Motor neuron (in vitro differentiated cells): ENCODE measurements at regions of chr18 and their contacts with region 1.

Region 1: DNA sequence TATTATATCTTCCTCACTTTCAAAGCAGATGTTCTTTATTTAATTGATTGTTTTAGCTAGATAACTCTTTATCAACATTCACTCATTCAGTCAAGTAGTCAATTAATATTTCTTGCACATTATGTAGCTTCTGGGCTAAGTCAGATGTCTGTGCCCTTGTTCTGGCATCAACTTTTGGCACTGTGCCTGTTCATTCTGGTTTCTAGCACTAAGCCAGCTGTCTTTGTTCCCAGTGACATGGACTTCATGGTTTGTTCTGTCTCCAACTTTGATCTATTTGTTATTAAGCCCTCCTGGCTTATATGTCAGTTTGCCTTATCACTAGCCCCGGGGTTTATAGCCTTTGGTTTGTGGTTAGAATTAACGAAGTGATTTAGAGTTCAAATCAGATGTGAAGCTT is 247.9 kb upstream of the SYT4 start:
- ATAC-seq: no peak
- H3K4me3 ChIP-seq: no peak overlapping the region
- H3K27ac ChIP-seq: no peak overlapping the region
- H3K4me1 ChIP-seq: no peaks in the 10 kb centered on the region

Region 2: DNA sequence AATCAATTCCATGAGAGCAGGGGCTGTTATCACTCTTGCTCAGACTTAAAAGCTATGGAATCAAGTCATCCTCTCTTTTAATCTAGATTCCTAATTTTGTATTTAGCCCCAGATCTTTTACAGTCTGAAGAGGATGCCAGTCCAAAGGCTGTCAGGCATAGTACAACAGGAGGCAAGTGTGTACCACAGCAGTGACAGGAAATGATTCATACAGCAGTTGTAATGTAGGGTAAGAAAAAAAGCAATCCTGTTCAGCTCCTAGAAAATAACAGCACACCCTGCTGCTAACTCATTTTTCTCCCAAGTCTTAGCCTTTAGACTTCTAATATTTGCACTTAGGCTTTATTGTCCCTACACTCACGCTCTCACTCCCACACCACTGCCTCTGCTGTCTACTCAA is 120.1 kb before region 1 on chr18:
- in situ Hi-C with region 1: no loop called
- ATAC-seq: peak in 5 of 8 experiments; percentile 49 to 64 (median 52)
- H3K4me3 ChIP-seq: no peak overlapping the region
- H3K27ac ChIP-seq: no peak overlapping the region
- H3K4me1 ChIP-seq: peaks cover 0 to 4% of the 10 kb centered on the region in 2 donors

Region 3: DNA sequence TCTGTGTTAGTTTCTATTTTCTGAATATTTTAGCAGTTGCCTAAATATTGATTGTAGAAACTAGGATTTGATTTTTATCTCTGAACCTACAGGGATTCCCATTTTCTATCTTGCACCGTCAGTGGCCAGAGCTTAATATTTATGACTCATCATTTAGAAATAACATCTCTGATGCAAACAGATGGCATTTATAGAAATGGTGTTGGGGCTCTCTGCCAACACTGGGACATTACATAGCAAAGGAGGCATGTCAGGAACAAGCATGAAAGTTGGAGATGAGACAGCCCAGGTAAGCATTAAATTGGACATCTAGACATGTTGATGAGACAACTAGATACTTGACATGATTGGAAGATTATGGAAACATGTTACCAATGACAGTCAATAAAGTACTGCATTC is 82.6 kb before region 1 on chr18:
- in situ Hi-C with region 1: loop called in 1 of 9 experiments (anchors 25 kb)
- ATAC-seq: no peak
- H3K4me3 ChIP-seq: no peak overlapping the region
- H3K27ac ChIP-seq: no peak overlapping the region
- H3K4me1 ChIP-seq: no peaks in the 10 kb centered on the region

Region 4: DNA sequence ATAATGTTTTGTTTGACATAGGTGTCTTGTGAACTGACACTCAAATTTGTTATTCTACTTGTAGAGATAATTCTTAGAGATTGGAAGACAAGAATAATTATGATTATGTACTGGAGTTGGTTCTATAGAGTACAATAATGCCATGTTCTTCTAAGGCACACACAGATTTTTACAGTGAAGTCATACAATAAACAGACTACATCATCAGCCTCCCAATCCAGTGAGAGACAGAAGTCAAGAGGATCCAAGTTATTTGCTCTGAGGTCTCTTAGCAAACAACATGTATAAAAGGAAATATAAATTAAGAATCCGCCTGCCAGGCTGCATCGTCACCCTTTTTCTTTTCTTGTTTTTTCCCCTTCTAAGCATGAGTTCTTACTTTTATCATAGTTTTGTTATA is 542.0 kb after region 1 on chr18:
- in situ Hi-C with region 1: no loop called
- ATAC-seq: peak in 1 of 8 experiments; percentile 92
- H3K4me3 ChIP-seq: no peak overlapping the region
- H3K27ac ChIP-seq: no peak overlapping the region
- H3K4me1 ChIP-seq: peaks cover 0 to 13% of the 10 kb centered on the region in 2 donors

Region 5: GRCh38 chr18:44482761-44483160 is 957.6 kb after region 1 on chr18:
- in situ Hi-C with region 1: no loop called
- ATAC-seq: no peak
- H3K4me3 ChIP-seq: no peak overlapping the region
- H3K27ac ChIP-seq: no peak overlapping the region
- H3K4me1 ChIP-seq: no peaks in the 10 kb centered on the region